Adrenal gland (tissue), 19 donors: ENCODE measurements at regions of chr12 and their contacts with region 1.

Region 1: DNA sequence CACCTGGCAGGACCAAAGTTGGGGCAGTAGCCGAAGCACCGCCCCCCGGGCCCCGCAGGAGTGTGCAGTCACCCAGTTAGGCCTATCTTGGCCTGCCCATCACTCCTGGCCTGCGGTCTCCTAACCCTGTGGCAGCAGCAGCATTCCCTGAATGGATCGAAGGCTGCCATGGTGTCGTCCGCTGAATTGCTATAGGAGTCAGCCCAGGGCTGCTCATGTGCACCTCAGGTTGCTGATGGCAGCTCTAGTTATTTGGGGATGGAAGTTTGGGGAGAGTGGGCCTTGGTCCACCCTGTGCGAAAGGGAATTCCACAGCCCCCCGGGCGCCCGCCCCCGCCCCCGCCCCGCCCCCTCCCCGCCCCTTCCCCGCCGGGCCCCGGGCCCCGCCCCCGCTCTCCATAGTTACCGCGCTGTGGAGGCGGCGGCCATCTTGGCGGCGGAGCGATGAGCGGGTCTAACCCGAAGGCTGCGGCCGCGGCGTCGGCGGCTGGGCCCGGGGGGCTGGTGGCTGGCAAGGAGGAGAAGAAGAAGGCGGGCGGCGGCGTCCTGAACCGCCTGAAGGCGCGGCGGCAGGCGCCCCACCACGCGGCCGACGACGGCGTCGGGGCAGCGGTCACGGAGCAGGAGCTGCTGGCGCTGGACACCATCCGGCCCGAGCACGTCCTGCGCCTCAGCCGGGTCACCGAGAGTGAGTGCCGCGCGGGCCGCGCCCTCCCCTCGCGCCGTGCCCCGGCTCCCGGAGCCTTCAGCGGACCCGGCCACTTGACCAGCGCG is at the start of gene UNC119B:
- DNase-seq: peak in 6 of 7 donors; percentile 61 to 74 (median 70)
- H3K4me3 ChIP-seq: peak within 1 kb of the TSS; percentile 48 to 94 (median 76)
- H3K27ac ChIP-seq: peak within 1 kb of the TSS; percentile 34 to 92 (median 82)
- H3K4me1 ChIP-seq: peaks cover 11 to 25% of the 10 kb centered on the region in 2 donors
- H3K27me3 ChIP-seq: no peaks in the 10 kb centered on the region
- CTCF ChIP-seq: no peak
- POLR2A ChIP-seq: peak in 1 of 2 donors; percentile 28
- total RNA-seq, gene UNC119B: 21.5 to 97.5 (median 66.2) TPM

Region 2: GRCh38 chr12:120580787-120581723 is 129.2 kb before region 1 on chr12 and contains the start of gene POP5:
- intact Hi-C with region 1: loop called (anchors 5 to 10 kb)
- DNase-seq: peak; percentile 96 to 99 (median 98)
- H3K4me3 ChIP-seq: peak within 1 kb of the TSS; percentile 30 to 66 (median 56)
- H3K27ac ChIP-seq: peak within 1 kb of the TSS in 4 of 5 donors; percentile 26 to 80 (median 66)
- H3K4me1 ChIP-seq: peaks cover 11 to 26% of the 10 kb centered on the region in 2 donors
- H3K27me3 ChIP-seq: no peaks in the 10 kb centered on the region
- CTCF ChIP-seq: no peak
- POLR2A ChIP-seq: peak; percentile 27 to 84
- total RNA-seq, gene POP5: 31.4 to 92.4 (median 65.0) TPM

Region 3: GRCh38 chr12:120649442-120650232 is 60.6 kb before region 1 on chr12:
- intact Hi-C with region 1: loop called (anchors 5 kb)
- DNase-seq: no peak
- H3K4me3 ChIP-seq: peak overlapping the region in 1 of 4 donors; percentile 39
- H3K27ac ChIP-seq: no peak overlapping the region
- H3K4me1 ChIP-seq: peaks cover 4 to 8% of the 10 kb centered on the region in 2 donors
- H3K27me3 ChIP-seq: peaks cover 5% of the 10 kb centered on the region
- CTCF ChIP-seq: peak in 1 of 6 experiments; percentile 6
- POLR2A ChIP-seq: no peak

Region 4: DNA sequence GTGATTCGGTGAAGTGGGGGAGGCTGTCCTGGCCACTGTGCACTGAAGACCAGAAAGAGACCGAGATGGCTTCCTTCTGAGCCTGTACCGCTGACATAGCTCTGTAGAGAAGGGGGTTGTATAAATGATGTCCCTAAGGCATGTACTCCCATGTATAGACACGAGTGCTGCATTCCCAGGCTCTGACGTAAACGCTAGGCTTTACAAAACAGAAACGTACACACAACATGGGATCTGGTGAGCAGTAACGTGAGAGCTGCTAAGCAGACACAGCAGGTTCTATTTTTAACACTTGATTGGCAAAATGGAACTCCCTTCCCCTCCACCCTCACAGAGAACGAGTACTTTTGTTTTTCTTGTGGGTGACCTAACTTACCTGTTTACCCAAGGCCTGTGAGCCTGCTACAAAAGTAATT is 51.3 kb after region 1 on chr12:
- intact Hi-C with region 1: no loop called
- DNase-seq: no peak
- H3K4me3 ChIP-seq: no peak overlapping the region
- H3K27ac ChIP-seq: no peak overlapping the region
- H3K4me1 ChIP-seq: no peaks in the 10 kb centered on the region
- H3K27me3 ChIP-seq: no peaks in the 10 kb centered on the region
- CTCF ChIP-seq: no peak
- POLR2A ChIP-seq: no peak

Region 5: GRCh38 chr12:120791669-120792176 is 81.5 kb after region 1 on chr12:
- intact Hi-C with region 1: no loop called
- DNase-seq: no peak
- H3K4me3 ChIP-seq: no peak overlapping the region
- H3K27ac ChIP-seq: peak overlapping the region in 1 of 5 donors; percentile 13
- H3K4me1 ChIP-seq: peaks cover 9 to 13% of the 10 kb centered on the region in 2 donors
- H3K27me3 ChIP-seq: no peaks in the 10 kb centered on the region
- CTCF ChIP-seq: no peak
- POLR2A ChIP-seq: no peak